Endothelial cell of umbilical vein (primary cell): ENCODE measurements at regions of chr10 and their contacts with region 1.

Region 1: GRCh38 chr10:100518761-100519241 is 860 bp downstream of the SEC31B start:
- DNase-seq: peak; percentile 82
- H3K4me3 ChIP-seq: no peak overlapping the region
- H3K27ac ChIP-seq: no peak overlapping the region
- H3K4me1 ChIP-seq: peaks cover 31% of the 10 kb centered on the region
- H3K27me3 ChIP-seq: no peaks in the 10 kb centered on the region
- CTCF ChIP-seq: peak; percentile 58 to 66
- POLR2A ChIP-seq: no peak

Region 2: DNA sequence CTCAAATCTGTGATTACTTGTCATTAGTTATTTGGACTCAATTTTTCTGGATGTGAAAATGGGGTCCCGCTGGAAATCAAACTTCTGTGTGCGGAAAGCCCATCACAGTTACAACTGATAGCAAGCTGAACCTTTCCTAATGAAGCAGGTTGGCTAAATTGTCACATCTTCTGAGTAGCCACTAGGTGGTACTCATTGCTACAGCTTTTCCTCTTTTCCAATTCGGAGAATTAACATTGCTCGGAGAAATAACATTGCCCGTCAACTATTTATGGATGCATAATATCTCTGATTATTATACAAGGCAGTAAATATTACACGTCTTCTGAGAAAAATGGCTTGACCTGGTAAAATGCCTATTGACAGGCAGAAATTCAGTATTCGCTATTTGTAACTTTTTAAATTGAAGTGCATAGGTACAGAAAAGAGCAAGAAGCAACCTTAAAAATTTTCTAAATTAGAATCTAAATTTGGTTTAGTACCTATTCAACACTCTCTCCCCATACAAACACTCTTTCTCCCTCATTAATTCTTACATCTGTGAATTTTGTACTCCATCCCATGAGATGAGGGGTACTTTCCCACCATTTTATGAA is 215.0 kb before region 1 on chr10:
- CTCF ChIA-PET with region 1: interaction called, 47 read pairs
- POLR2A ChIA-PET with region 1: no interaction called
- dilution Hi-C with region 1: no loop called
- intact Hi-C with region 1: no loop called
- DNase-seq: peak; percentile 22
- H3K4me3 ChIP-seq: no peak overlapping the region
- H3K27ac ChIP-seq: no peak overlapping the region
- H3K4me1 ChIP-seq: no peaks in the 10 kb centered on the region
- H3K27me3 ChIP-seq: peaks cover 11 to 18% of the 10 kb centered on the region in 2 experiments
- CTCF ChIP-seq: peak; percentile 52
- POLR2A ChIP-seq: no peak

Region 3: GRCh38 chr10:100433253-100434240 is 85.3 kb before region 1 on chr10:
- CTCF ChIA-PET with region 1: interaction called, 36 read pairs
- POLR2A ChIA-PET with region 1: no interaction called
- dilution Hi-C with region 1: no loop called
- intact Hi-C with region 1: loop called (anchors 1 kb)
- DNase-seq: peak; percentile 93
- H3K4me3 ChIP-seq: no peak overlapping the region
- H3K27ac ChIP-seq: no peak overlapping the region
- H3K4me1 ChIP-seq: no peaks in the 10 kb centered on the region
- H3K27me3 ChIP-seq: peaks cover 2% of the 10 kb centered on the region in 2 experiments
- CTCF ChIP-seq: peak; percentile 91 to 100
- POLR2A ChIP-seq: no peak

Region 4: DNA sequence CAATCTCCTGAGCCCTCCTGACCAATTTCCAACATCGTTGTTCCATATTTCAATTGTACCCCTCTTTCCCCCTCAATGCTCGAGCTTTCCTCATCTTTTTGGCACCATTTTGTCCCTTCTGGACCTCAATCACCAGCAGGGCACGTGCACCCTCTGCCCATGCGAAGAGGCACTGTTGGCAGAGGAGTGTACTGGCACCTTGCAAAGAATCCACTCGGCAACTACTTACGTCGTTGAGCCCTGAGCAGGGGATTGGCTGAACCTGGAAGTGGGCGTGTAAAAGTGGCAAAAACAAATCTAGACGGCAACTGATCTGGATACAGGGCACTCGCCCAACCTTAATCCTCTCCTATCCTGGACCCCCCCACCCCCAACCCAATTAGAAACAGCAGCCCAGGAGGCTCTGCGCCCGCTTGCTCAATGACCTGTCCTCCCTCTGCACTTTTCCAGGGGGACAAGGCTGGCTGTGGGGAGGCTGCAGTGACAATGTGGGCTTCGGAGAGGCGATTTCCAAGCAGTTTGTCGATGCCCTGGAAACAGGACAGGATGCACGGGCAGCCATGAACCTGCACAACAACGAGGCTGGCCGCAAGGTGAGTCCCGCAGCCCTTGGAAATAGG is 37.2 kb before region 1 on chr10:
- CTCF ChIA-PET with region 1: interaction called, 78 read pairs
- POLR2A ChIA-PET with region 1: no interaction called
- dilution Hi-C with region 1: no loop called
- intact Hi-C with region 1: loop called (anchors 1 kb)
- DNase-seq: peak; percentile 97
- H3K4me3 ChIP-seq: peak overlapping the region; percentile 13 to 48 (median 27)
- H3K27ac ChIP-seq: no peak overlapping the region
- H3K4me1 ChIP-seq: peaks cover 12% of the 10 kb centered on the region
- H3K27me3 ChIP-seq: peaks cover 35 to 40% of the 10 kb centered on the region in 2 experiments
- CTCF ChIP-seq: peak in 1 of 2 donors; percentile 2
- POLR2A ChIP-seq: no peak

Region 5: GRCh38 chr10:100529475-100530298 is 10.9 kb after region 1 on chr10 and contains the start of gene NDUFB8:
- CTCF ChIA-PET with region 1: interaction called, 48 read pairs
- POLR2A ChIA-PET with region 1: no interaction called
- dilution Hi-C with region 1: no loop called
- intact Hi-C with region 1: loop called (anchors 1 kb)
- DNase-seq: peak; percentile 87
- H3K4me3 ChIP-seq: peak within 1 kb of the TSS; percentile 56 to 81 (median 78)
- H3K27ac ChIP-seq: peak within 1 kb of the TSS; percentile 49
- H3K4me1 ChIP-seq: peaks cover 14% of the 10 kb centered on the region
- H3K27me3 ChIP-seq: no peaks in the 10 kb centered on the region
- CTCF ChIP-seq: no peak
- POLR2A ChIP-seq: peak; percentile 86
- total RNA-seq, gene NDUFB8: 193 and 202 TPM in 2 replicates

Region 6: DNA sequence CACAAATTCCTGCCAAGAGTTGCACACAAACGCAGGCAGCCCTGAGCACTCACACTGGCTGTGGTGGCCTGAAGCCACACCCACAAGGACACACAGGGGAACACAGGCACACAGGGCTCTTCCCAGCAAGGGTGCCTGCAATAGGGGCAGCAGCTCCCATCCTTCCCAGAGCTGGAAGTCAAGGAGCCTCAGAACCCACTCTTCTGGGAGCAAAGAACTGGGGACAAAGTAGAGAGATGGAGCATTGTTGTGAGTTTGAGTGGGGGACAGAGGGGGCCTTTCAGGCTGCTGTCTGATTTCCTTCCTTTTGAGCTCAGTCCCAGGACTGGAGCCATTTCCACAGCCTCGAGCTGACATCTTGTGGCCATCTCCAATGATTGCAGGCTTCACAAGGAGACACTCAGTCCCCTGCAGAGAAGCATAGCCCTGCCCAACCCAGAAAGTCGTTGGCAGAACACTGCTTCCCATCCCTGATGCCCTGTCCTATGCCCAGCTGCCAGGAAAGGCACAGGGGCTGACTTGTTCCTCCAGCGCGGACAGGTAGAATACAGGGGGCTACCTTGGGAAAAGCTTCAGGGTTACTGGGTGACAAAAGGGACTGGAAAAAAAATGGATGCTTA is 359.6 kb after region 1 on chr10:
- CTCF ChIA-PET with region 1: interaction called, 47 read pairs
- POLR2A ChIA-PET with region 1: no interaction called
- dilution Hi-C with region 1: no loop called
- intact Hi-C with region 1: loop called (anchors 5 kb)
- DNase-seq: peak; percentile 57
- H3K4me3 ChIP-seq: no peak overlapping the region
- H3K27ac ChIP-seq: no peak overlapping the region
- H3K4me1 ChIP-seq: peaks cover 13% of the 10 kb centered on the region
- H3K27me3 ChIP-seq: peaks cover 5 to 11% of the 10 kb centered on the region in 2 experiments
- CTCF ChIP-seq: peak; percentile 62 to 77
- POLR2A ChIP-seq: no peak